ENCODE measurements at regions of chr15 and their contacts with region 1.

Region 1: DNA sequence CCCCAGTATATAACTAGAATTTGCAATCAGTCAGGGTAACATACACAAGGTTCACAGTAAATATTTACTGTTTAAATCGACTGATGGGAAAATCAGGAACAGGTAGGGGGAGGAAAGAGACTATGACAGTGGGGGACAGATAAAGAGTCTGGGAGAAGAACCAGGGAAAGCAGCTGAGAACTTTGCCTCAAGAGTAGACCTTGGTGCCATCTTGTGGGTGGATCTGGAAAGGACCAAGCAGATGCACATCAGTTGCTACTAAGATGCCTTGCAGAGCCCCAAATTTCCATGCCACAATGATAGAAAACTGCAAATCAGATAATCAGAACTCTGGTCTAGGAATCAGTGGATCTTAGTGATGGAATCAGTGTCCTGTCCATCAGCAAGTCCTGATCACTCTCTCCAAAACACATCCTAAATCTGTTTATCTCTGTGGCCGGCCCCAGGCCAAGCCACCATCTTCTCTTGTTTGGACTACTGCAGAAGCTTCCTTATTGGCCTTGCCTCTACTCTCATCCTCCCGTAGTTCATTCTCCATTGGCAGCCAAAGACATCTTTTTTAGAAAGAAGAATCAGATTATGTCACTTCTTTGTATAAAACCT is 62.7 kb downstream of the PDE8A start:
- DNase-seq: peak; percentile 60
- H3K4me3 ChIP-seq: no peak overlapping the region
- CTCF ChIP-seq: peak; percentile 80

Region 2: GRCh38 chr15:84669726-84670125 is 374.6 kb before region 1 on chr15:
- in situ Hi-C with region 1: loop called (anchors 10 kb)
- DNase-seq: no peak
- H3K4me3 ChIP-seq: no peak overlapping the region
- CTCF ChIP-seq: no peak

Measured in astrocyte of the cerebellum (primary cell).